ENCODE measurements at regions of chr1 and their contacts with region 1.

Region 1: GRCh38 chr1:235075188-235075926 is 53.3 kb downstream of the TOMM20 start:
- DNase-seq: no peak
- H3K4me3 ChIP-seq: peak overlapping the region in 1 of 4 donors; percentile 42
- H3K27ac ChIP-seq: peak overlapping the region; percentile 88 to 94 (median 92)
- H3K4me1 ChIP-seq: peaks cover 48 to 85% (median 57%) of the 10 kb centered on the region in 3 donors
- H3K27me3 ChIP-seq: no peaks in the 10 kb centered on the region
- CTCF ChIP-seq: no peak
- POLR2A ChIP-seq: no peak

Region 2: GRCh38 chr1:234610348-234611152 is 464.8 kb before region 1 on chr1:
- intact Hi-C with region 1: loop called (anchors 5 kb)
- DNase-seq: peak; percentile 68
- H3K4me3 ChIP-seq: peak overlapping the region; percentile 50 to 90 (median 66)
- H3K27ac ChIP-seq: peak overlapping the region; percentile 99 to 100 (median 100)
- H3K4me1 ChIP-seq: peaks cover 30 to 63% (median 34%) of the 10 kb centered on the region in 3 donors
- H3K27me3 ChIP-seq: no peaks in the 10 kb centered on the region
- CTCF ChIP-seq: peak in 3 of 6 experiments; percentile 6 to 30 (median 28)
- POLR2A ChIP-seq: peak in 3 of 4 donors; percentile 98 to 99 (median 98)

Measured in esophagus squamous epithelium (tissue), 5 donors.